A673 (cell line): ENCODE measurements at regions of chr13 and their contacts with region 1.

Region 1: GRCh38 chr13:32969516-32969941 is 46.7 kb upstream of the KL start:
- DNase-seq: peak; percentile 25
- H3K4me3 ChIP-seq: no peak overlapping the region
- H3K27ac ChIP-seq: peak overlapping the region; percentile 34
- H3K4me1 ChIP-seq: peaks cover 19% of the 10 kb centered on the region
- H3K27me3 ChIP-seq: no peaks in the 10 kb centered on the region
- CTCF ChIP-seq: no peak

Region 2: GRCh38 chr13:32415019-32415418 is 554.5 kb before region 1 on chr13:
- CTCF ChIA-PET with region 1: no interaction called
- POLR2A ChIA-PET with region 1: no interaction called
- intact Hi-C with region 1: no loop called
- DNase-seq: peak; percentile 41
- H3K4me3 ChIP-seq: no peak overlapping the region
- H3K27ac ChIP-seq: no peak overlapping the region
- H3K4me1 ChIP-seq: no peaks in the 10 kb centered on the region
- H3K27me3 ChIP-seq: no peaks in the 10 kb centered on the region
- CTCF ChIP-seq: peak; percentile 63

Region 3: GRCh38 chr13:32955881-32956594 is 13.5 kb before region 1 on chr13:
- CTCF ChIA-PET with region 1: no interaction called
- POLR2A ChIA-PET with region 1: no interaction called
- intact Hi-C with region 1: loop called (anchors 1 kb)
- DNase-seq: peak; percentile 80
- H3K4me3 ChIP-seq: no peak overlapping the region
- H3K27ac ChIP-seq: peak overlapping the region; percentile 35
- H3K4me1 ChIP-seq: peaks cover 17% of the 10 kb centered on the region
- H3K27me3 ChIP-seq: no peaks in the 10 kb centered on the region
- CTCF ChIP-seq: no peak

Region 4: GRCh38 chr13:33349986-33350826 is 380.7 kb after region 1 on chr13:
- CTCF ChIA-PET with region 1: no interaction called
- POLR2A ChIA-PET with region 1: no interaction called
- intact Hi-C with region 1: no loop called
- DNase-seq: peak; percentile 45
- H3K4me3 ChIP-seq: peak overlapping the region; percentile 69
- H3K27ac ChIP-seq: peak overlapping the region; percentile 69
- H3K4me1 ChIP-seq: peaks cover 24% of the 10 kb centered on the region
- H3K27me3 ChIP-seq: no peaks in the 10 kb centered on the region
- CTCF ChIP-seq: no peak